Pancreas (tissue), 10 donors: ENCODE measurements at regions of chr4 and their contacts with region 1.

Region 1: GRCh38 chr4:173013232-173013930 is 155.2 kb upstream of the GALNT7 start:
- DNase-seq: peak in 1 of 6 donors; percentile 50
- ATAC-seq: peak; percentile 61 to 90 (median 82)
- H3K4me3 ChIP-seq: no peak overlapping the region
- H3K27ac ChIP-seq: no peak overlapping the region
- H3K4me1 ChIP-seq: no peaks in the 10 kb centered on the region
- H3K27me3 ChIP-seq: no peaks in the 10 kb centered on the region
- CTCF ChIP-seq: peak; percentile 30 to 68 (median 46)

Region 2: DNA sequence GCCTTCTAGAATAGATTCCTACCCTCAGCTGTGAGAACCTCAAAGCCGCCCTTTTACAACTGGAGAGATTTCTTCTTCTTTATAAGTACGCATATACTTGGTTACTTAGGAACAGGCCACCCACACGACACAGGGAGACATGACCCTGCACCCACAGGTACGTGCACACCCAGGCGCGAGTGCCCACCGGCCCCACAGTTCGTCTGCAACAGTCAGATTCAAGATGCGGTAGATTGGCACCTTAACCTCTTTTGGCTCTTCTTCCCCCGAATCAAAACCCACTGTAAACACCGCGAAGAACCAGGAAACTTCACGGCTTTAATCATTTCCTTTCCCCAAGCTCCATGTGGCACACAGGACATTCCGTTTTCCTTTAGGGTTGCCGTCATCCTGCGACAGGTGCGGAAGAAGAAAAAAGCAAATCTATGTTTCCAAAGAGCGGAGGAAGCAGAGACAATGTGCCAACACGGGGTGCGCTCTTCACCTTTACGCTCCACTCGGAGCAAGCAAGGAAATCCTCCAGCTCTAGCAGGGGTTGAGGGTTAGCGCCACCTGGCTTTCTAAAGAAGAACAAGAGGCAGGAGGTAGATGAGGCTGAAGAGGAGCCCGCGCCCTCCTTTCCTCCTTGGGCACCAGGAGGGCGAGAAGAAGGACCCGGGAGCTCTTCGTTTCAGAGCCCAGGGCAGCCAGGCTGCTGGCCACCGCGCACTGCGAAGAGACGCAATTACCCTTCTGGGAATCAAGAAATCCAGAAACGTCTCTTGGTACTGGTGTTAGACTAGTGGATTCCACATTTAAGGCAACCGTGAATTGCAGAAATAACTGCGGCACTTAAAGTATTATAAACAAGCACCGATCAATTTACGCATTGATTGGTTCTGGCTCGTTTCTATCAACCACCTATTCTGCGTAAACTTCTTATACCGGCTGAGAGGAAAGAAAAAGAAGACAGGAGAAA is 480.9 kb after region 1 on chr4:
- intact Hi-C with region 1: loop called in 1 of 3 experiments (anchors 10 kb)
- DNase-seq: peak in 5 of 6 donors; percentile 44 to 63 (median 56)
- ATAC-seq: peak; percentile 87 to 98 (median 95)
- H3K4me3 ChIP-seq: peak overlapping the region in 3 of 4 donors; percentile 14 to 46 (median 34)
- H3K27ac ChIP-seq: no peak overlapping the region
- H3K4me1 ChIP-seq: no peaks in the 10 kb centered on the region
- H3K27me3 ChIP-seq: no peaks in the 10 kb centered on the region
- CTCF ChIP-seq: peak; percentile 52 to 70 (median 64)